Cardiac septum (tissue), 1 donor: ENCODE measurements at regions of chr14 and their contacts with region 1.

Region 1: DNA sequence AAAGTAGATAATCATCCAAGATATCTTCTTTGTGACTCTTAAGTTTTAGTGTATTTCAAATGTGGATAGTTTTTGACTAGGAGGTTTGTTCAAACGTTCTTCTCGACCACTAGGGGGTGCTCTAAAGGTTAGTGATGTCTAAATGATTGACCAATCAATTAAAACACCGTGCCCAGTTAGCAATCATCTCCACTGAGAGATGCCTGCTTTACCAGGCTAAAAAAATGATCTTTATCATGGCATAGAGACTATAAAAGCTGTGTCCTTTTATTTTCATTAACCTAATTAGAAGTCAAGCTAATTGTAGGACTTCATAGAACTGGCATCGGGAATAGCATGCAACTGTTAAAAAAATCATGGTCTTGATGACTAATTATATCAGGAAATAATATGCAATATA is 153.9 kb downstream of the PRKCH start:
- DNase-seq: no peak

Region 2: DNA sequence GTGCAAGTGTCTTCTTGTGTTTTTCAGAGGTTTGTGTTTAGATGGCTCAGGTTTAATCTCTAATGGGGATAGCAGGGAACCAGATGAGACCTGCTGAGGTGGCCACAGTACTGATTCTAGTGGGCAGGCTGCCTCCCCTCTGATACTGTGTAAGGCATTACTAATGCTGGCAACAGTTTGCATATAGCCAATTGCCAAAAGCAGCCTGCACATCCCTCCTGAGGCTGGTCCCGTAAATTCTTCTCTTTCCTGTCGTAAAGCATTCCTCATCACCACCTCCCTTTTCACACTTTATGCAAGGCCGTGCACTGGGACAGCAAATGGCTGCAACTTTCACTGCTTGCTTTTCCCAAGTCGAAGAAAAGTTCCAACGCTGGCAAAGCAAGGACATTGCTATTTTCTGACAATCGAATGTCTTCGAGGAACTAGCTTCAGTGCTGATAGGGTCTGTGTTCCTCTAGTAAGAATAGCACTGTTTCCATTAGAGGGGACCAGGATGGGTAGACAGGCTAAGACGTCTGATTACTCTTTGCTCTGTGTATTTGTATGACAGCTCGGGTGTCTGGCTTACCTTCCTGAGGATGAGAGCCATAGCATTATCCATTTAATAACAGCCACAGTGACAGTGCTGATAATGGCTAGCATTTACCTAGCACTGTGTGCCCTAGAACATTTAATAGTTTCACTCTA is 41.8 kb after region 1 on chr14:
- intact Hi-C with region 1: loop called (anchors 5 kb)
- DNase-seq: no peak

Region 3: DNA sequence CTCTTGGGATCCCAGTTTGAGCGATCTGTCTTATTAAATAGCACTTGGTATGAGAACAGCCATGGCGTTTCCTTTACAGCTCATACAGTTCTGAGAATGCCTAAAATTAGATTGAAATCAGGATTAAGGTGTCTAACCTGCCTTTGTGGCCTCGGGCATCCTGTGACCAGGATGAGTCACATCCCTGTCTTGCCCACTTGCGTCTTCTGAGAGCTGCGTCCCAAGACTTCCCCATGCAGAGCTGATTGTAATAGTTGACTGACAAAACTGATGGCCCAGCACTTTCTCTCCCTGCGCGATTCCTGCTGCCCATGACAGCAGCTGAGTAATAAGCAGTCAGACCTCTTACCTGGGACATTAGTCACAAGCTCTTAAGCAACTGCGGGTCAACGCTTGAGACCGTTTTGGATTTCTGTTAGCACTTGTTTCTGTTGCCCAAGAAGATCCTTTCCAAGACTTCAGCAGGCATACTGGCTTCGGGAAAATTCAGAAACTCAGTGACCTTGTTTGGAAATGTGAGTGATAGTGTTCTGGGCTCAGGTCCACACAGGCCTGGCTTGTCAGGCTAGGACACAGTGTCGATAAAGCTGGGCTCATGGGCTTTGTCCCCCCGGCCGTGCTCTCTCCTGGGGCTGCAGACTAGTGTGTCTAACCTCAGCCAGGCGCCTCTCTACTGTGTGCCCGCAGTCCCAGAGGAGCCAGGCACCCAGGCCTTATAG is 50.1 kb after region 1 on chr14:
- intact Hi-C with region 1: loop called (anchors 2 kb)
- DNase-seq: peak; percentile 87

Region 4: DNA sequence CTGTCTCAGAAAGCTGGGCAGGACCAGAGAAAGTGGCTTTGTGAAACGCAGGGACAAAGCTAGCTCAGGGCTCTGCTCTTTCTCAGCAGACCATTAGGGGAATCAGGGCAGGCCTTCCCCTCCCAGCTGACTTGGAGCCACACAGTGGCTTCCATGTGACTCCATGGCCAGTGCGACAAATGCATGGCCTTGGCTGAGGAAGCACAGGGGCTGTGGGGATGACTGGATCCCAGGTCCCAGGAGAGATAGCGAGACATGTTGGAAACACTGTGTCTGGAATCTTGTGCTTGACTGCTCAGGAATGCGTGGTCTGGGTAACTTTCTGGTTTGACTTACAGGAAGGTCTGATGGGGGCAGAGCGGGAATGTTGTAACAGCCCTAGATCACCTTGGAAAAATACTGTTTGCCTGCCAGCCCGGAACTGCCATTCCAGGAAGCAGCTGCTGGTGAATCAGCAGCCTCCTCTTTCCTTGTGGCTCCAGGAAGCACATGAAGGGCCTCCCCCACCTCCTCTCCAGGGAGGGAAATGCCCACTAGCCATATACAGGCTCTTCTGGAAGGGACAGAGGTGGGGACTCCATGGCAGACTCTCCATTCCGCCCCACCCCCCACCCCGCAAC is 86.5 kb after region 1 on chr14:
- intact Hi-C with region 1: loop called (anchors 5 kb)
- DNase-seq: peak; percentile 89

Region 5: DNA sequence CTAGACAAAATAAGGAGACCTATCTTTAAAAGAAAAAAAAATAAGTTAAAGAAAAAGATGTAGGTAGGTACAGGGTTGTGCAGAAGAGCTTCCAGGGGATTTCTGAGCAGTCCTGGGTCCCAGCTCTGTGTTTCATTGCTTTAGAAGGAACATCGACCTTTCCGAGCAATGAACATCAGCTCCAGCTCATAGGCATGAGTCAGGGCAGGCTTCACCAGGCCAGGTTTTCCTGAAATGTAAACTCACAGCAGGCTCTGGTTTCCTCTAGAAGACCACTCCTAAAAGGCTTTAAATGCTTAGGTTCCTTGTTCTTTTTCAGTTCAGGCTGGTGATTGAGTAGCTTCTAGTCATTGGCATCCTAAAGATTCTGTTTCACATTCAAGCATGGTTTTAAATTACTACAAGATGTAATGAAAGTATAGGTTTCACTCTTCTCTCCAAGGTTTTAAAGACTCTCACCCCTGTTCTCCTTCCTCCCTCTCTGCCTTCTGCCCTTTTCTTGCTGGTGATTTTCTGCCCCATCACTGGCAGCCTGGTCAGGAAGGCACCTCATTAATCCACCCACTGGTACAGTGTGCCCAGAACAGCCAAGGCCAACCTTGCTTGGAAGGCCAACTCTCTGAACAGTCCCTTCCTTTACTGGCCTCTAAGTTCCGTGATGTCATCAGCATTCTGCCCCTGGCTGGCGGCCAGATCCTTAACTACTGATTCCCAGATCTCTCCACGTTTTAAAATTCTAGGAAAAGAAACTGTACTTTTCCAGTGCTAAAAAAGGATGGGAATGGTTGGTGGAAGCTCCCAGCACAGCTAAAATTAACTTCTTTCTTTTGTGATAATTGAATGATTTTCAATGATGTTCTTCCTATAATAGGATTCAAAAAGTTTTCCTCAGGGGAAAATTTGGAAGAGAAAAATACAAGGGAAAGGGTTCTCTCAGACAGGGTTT is 110.6 kb after region 1 on chr14:
- intact Hi-C with region 1: loop called (anchors 5 kb)
- DNase-seq: peak; percentile 84

Region 6: DNA sequence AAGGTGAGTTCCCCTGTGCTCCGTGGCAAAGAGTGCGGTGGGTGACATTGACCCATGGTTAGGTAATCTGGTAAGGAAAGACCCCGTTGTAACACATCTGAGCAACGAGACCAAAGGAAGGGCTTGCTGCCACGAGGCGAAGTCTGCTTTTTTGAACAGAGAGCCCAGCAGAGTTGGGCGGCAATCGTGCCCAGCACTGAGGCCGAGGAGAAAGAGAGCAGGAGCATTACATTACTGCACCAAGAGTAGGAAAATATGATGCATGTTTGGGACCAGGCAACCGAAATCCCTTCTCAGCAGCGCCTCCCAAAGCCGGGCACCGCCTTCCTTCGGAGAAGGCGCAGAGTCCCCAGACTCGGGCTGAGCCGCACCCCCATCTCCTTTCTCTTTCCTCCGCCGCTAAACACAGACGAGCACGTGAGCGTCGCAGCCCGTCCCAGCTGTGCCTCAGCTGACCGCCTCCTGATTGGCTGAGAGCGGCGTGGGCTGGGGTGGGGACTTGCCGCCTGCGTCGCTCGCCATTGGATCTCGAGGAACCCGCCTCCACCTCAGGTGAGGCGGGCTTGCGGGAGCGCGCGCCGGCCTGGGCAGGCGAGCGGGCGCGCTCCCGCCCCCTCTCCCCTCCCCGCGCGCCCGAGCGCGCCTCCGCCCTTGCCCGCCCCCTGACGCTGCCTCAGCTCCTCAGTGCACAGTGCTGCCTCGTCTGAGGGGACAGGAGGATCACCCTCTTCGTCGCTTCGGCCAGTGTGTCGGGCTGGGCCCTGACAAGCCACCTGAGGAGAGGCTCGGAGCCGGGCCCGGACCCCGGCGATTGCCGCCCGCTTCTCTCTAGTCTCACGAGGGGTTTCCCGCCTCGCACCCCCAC is 219.7 kb after region 1 on chr14 and contains the start of gene HIF1A:
- intact Hi-C with region 1: loop called (anchors 5 kb)
- DNase-seq: peak; percentile 98
- total RNA-seq, gene HIF1A: 73.2 TPM

Region 7: DNA sequence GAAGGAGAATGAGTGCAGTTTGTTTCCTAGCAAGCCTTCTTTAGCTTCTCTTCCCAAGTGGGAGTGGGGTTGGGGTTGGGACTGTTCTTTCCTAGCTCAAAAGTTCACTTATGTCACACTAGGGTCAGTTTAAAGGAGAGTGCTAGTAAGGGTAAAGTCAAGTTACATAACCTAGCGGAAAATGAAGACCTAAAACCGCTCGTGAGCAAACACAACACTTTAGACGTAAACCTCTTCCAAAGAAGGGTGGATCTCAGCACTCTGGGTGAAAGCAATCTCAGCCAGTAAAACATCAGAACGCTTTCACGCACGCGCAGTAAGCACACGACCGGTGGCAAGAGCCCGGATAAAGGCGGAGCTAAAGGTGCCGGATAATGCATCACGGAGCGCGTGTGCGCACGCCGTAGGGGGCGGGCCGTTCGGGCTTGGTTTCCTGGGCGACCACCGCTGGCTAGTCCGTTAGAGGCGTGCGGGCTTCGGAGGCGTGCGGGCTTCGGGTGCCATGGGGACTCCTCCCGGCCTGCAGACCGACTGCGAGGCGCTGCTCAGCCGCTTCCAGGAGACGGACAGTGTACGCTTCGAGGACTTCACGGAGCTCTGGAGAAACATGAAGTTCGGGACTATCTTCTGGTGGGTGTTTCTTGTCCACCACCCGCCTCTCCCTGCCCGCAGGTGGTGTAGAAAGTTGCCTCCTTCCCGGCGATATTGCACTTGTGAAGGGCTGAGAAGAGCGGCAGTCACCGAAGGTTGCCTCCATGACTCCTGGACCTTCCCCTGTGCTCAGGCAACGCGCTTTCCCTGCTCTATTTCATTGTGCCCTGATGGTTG is 286.9 kb after region 1 on chr14 and contains the start of gene SNAPC1:
- intact Hi-C with region 1: loop called (anchors 2 kb)
- DNase-seq: peak; percentile 97
- total RNA-seq, gene SNAPC1: 5.0 TPM